Naive thymus-derived CD4-positive, alpha-beta T cell (primary cell): ENCODE measurements at regions of chr12 and their contacts with region 1.

Region 1: DNA sequence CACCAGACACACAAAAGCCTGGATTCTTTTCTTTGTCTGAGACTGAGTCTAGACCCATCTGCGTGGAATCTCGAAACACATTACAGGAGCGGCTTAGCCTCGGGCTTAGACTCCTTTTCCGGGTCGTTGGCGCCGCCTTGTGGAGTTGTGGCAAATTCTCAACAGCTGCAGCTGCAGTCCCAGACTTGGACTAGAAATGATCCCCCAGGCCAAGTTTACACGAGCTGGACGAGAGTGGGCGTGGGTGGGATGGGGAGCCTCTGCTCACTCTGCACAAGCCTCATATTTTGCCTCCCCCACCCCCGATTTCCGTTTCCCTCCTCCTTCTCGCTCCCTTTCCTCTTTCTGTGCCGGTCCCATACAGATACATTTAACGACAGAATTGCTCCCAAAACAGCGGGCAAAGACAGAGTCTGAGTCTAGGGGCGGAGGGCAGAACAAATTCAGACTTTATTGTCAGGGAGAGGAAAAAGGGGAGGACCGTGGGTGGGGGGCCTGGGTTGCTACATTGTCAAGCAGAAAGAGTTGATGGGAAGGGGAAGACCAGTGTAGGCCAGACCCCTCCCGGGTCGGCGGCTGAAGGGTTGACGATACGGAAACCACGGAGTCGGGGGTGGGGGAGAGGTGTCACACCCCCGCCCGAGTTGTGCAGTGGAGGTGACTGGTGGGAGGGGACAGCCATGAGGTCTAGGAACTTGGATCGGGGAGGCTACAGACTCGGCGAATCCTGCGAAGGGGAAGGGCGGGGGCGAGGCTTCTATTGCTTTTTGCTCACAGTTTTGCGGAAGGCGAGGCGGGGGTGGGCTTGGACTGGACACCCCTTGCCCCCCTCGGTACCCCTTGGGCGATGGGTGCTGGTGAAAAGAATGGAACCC is 4.7 kb upstream of the GPR84 start:
- DNase-seq: peak; percentile 67 to 87 (median 83)
- ATAC-seq: peak; percentile 89
- H3K4me3 ChIP-seq: peak overlapping the region; percentile 46
- H3K4me3 Mint-ChIP-seq: peak overlapping the region; percentile 26 to 79 (median 68)
- H3K27ac ChIP-seq: no peak overlapping the region
- H3K27ac Mint-ChIP-seq: peak overlapping the region in 7 of 9 donors; percentile 20 to 87 (median 54)
- H3K4me1 ChIP-seq: peaks cover 12 to 24% of the 10 kb centered on the region in 2 donors
- H3K4me1 Mint-ChIP-seq: peaks cover 21 to 49% (median 38%) of the 10 kb centered on the region in 7 donors
- H3K27me3 ChIP-seq: no peaks in the 10 kb centered on the region
- H3K27me3 Mint-ChIP-seq: peaks cover 0 to 9% (median 0%) of the 10 kb centered on the region in 5 donors

Region 2: DNA sequence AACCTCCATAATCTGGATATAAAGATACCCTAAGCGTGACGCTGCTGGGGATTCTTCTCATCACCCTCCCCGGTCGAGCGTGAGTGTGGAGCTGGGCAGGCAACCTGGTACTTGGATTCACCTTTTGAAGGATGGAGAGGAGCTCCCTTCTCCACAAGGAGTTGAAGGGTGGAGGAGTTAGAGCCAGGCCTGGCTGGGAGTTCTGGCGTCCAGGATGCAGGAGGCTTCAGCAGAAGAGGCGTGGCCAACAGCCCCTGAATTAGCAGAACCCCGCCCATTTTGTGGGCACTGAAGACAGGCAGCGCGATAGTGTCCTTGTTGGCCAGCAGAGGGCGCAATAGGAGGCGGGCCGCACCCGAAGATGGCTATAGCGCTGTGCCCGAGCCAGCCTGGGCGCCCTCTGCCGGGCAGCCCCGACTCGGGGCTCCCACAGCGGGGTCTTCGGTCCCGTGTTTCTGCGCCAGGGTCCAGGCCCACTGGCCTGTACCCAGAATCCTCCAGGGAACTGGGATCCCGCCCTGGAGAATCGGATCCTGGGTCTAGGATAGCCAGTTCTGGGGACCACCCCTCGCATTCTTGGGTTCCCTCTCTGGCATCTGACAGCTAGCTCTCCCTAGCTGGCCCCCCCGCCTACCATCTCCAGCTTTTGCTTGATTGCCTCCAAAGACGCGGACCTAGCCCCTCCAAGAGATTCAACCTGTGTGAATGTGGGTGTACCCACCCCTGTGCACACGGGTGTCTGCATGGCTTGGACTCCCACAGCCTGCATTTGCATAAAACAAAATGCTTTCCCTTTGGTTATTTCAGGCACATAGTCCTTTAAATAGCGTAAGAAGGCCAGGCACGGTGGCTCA is 154.2 kb before region 1 on chr12:
- CTCF ChIA-PET with region 1: interaction called, 10 read pairs
- POLR2A ChIA-PET with region 1: interaction called, 4 read pairs
- intact Hi-C with region 1: loop called (anchors 1 to 2 kb)
- DNase-seq: peak; percentile 80 to 90 (median 89)
- ATAC-seq: peak; percentile 95
- H3K4me3 ChIP-seq: peak overlapping the region; percentile 56
- H3K4me3 Mint-ChIP-seq: peak overlapping the region; percentile 72 to 93 (median 82)
- H3K27ac ChIP-seq: no peak overlapping the region
- H3K27ac Mint-ChIP-seq: peak overlapping the region in 2 of 9 donors; percentile 28 to 52
- H3K4me1 ChIP-seq: peaks cover 25 to 35% of the 10 kb centered on the region in 2 donors
- H3K4me1 Mint-ChIP-seq: peaks cover 18 to 52% (median 31%) of the 10 kb centered on the region in 7 donors
- H3K27me3 ChIP-seq: no peaks in the 10 kb centered on the region
- H3K27me3 Mint-ChIP-seq: peaks cover 0 to 40% (median 5%) of the 10 kb centered on the region in 5 donors

Region 3: DNA sequence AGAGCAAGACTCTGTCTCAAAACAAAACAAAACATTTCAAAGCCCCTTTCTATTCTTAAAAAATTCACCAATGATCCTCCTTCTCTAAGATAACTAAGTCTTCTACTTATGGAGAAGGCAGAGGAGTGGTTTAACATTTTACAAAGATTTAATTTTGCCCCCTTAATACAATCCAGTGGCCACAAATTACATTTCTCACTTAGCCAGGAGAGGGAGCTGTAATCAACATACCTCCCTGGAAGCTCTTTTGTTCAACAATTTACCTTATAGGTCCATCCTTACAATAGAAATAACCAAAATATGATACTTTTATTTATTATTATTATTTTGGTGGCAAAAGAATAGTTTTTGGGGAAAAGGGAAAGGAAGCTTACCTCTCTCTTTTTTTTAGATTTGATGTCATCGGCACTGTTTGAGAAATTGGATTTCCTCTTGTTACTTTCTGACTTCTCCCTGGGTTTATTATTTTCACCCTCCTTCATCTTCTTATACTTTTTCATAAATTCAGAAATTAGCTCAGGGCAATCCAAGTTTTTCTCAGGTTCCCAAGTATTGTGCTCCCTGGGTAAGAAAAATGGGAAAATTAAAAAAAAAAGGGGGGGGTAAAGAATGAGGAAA is 117.2 kb before region 1 on chr12:
- CTCF ChIA-PET with region 1: interaction called, 8 read pairs
- POLR2A ChIA-PET with region 1: interaction called, 3 read pairs
- intact Hi-C with region 1: loop called (anchors 1 to 2 kb)
- DNase-seq: peak in 7 of 9 donors; percentile 9 to 54 (median 47)
- ATAC-seq: peak; percentile 75
- H3K4me3 ChIP-seq: no peak overlapping the region
- H3K4me3 Mint-ChIP-seq: peak overlapping the region in 1 of 10 donors; percentile 18
- H3K27ac ChIP-seq: no peak overlapping the region
- H3K27ac Mint-ChIP-seq: peak overlapping the region in 2 of 9 donors; percentile 48 to 76
- H3K4me1 ChIP-seq: no peaks in the 10 kb centered on the region
- H3K4me1 Mint-ChIP-seq: peaks cover 7 to 23% (median 17%) of the 10 kb centered on the region in 7 donors
- H3K27me3 ChIP-seq: no peaks in the 10 kb centered on the region
- H3K27me3 Mint-ChIP-seq: no peaks in the 10 kb centered on the region

Region 4: GRCh38 chr12:54324617-54325441 is 44.1 kb before region 1 on chr12 and contains the start of gene COPZ1:
- CTCF ChIA-PET with region 1: interaction called, 7 read pairs
- POLR2A ChIA-PET with region 1: no interaction called
- intact Hi-C with region 1: loop called in 1 of 2 experiments (anchors 2 kb)
- DNase-seq: peak; percentile 69 to 98 (median 94)
- ATAC-seq: peak; percentile 97
- H3K4me3 ChIP-seq: peak within 1 kb of the TSS; percentile 95
- H3K4me3 Mint-ChIP-seq: peak within 1 kb of the TSS; percentile 87 to 100 (median 95)
- H3K27ac ChIP-seq: peak within 1 kb of the TSS; percentile 80
- H3K27ac Mint-ChIP-seq: peak within 1 kb of the TSS; percentile 91 to 99 (median 95)
- H3K4me1 ChIP-seq: peaks cover 4 to 22% of the 10 kb centered on the region in 2 donors
- H3K4me1 Mint-ChIP-seq: peaks cover 8 to 46% (median 42%) of the 10 kb centered on the region in 7 donors
- H3K27me3 ChIP-seq: no peaks in the 10 kb centered on the region
- H3K27me3 Mint-ChIP-seq: no peaks in the 10 kb centered on the region
- total RNA-seq, gene COPZ1: 47.5 to 141 (median 80.0) TPM

Region 5: DNA sequence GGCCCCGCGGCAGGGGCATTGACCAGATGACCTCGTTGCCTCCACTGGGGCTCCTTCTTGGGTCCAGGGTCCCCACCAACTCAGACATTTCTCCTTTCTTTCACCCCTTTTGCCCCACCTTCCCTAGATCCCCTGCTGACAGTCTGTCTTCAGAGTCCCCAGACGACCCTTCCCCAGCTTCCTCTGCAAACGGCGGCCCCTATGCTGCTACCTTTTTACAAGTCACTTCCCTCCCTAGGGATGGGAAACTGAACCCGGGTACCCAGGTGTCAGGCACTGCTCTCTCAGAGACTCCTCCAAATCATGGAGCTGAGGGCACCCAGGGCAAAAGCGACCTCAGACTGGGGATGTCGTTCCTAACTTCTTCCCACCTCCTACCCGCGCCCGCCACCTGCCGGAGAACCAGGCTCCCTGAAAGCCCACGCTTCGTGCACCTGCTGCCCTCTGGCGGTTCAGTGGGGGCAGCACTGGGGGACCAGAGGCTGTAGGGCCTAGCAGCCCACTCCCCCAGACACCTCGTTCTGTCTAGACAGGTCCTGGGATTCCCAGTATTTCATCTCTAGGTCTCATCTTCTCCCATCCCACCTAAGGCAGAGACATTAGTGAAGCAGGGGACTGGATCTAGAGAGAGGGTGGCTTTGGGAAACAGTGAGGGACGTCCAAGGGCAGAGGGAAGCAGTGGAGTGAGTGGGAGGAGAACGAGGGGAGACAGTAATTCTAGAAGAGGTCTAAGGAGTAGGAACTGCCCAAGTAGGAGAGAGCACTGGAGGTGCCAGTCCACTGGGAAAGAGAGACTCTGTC is 10.7 kb after region 1 on chr12:
- CTCF ChIA-PET with region 1: interaction called, 10 read pairs
- POLR2A ChIA-PET with region 1: interaction called, 3 read pairs
- intact Hi-C with region 1: loop called in 1 of 2 experiments (anchors 1 kb)
- DNase-seq: peak; percentile 73 to 93 (median 84)
- ATAC-seq: peak; percentile 87
- H3K4me3 ChIP-seq: no peak overlapping the region
- H3K4me3 Mint-ChIP-seq: peak overlapping the region; percentile 43 to 79 (median 59)
- H3K27ac ChIP-seq: no peak overlapping the region
- H3K27ac Mint-ChIP-seq: peak overlapping the region in 3 of 9 donors; percentile 0 to 46 (median 38)
- H3K4me1 ChIP-seq: peaks cover 0 to 3% of the 10 kb centered on the region in 2 donors
- H3K4me1 Mint-ChIP-seq: peaks cover 6 to 19% (median 6%) of the 10 kb centered on the region in 7 donors
- H3K27me3 ChIP-seq: no peaks in the 10 kb centered on the region
- H3K27me3 Mint-ChIP-seq: peaks cover 0 to 5% (median 0%) of the 10 kb centered on the region in 5 donors

Region 6: DNA sequence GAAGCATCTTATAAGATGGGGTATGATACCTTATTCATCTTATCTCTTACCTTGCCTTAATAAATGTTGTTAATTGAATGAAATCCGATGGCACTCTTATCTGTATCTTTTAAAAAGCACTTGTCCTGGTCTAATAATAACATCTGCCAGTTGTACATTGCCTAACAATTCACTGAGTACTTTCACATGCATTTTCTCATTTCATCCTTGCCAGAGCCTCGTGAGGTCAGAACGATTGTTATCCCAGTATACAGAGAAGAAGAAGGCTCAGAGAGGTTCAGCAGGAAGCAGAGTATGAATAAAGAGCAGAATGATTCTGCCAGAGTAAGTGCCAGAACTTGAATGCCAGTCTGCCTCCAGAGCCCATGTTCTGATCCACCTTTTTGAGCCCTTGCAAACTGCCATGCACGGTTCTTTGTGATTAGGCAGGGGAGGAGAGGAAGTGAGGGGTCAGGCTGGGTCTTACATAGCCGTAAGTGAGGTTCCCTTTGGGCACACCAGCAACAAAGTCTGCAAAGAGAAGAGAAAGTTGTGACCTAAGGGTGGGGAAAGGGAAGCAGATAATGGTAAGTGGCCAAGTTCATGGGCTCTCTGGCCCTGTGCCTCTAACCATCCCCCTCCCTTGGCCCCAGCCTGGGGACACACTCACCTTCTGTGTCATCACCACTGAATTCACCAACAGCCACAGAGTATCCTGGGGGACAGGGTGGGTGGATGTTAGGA is 38.4 kb after region 1 on chr12:
- CTCF ChIA-PET with region 1: no interaction called
- POLR2A ChIA-PET with region 1: no interaction called
- intact Hi-C with region 1: no loop called
- DNase-seq: no peak
- ATAC-seq: no peak
- H3K4me3 ChIP-seq: no peak overlapping the region
- H3K4me3 Mint-ChIP-seq: no peak overlapping the region
- H3K27ac ChIP-seq: peak overlapping the region; percentile 51
- H3K27ac Mint-ChIP-seq: peak overlapping the region in 8 of 9 donors; percentile 71 to 97 (median 90)
- H3K4me1 ChIP-seq: peaks cover 23 to 39% of the 10 kb centered on the region in 2 donors
- H3K4me1 Mint-ChIP-seq: peaks cover 32 to 79% (median 55%) of the 10 kb centered on the region in 7 donors
- H3K27me3 ChIP-seq: no peaks in the 10 kb centered on the region
- H3K27me3 Mint-ChIP-seq: no peaks in the 10 kb centered on the region